WTC11 (cell line): ENCODE measurements at regions of chr10 and their contacts with region 1.

Region 1: GRCh38 chr10:15585303-15585715 is 134.4 kb downstream of the ITGA8 start:
- DNase-seq: peak; percentile 74
- ATAC-seq: peak; percentile 99
- H3K4me3 Mint-ChIP-seq: no peak overlapping the region
- H3K27ac Mint-ChIP-seq: no peak overlapping the region
- H3K4me1 Mint-ChIP-seq: no peaks in the 10 kb centered on the region
- H3K27me3 Mint-ChIP-seq: no peaks in the 10 kb centered on the region; the same call in 1 of the 2 replicates
- CTCF ChIP-seq: peak; percentile 90

Region 2: DNA sequence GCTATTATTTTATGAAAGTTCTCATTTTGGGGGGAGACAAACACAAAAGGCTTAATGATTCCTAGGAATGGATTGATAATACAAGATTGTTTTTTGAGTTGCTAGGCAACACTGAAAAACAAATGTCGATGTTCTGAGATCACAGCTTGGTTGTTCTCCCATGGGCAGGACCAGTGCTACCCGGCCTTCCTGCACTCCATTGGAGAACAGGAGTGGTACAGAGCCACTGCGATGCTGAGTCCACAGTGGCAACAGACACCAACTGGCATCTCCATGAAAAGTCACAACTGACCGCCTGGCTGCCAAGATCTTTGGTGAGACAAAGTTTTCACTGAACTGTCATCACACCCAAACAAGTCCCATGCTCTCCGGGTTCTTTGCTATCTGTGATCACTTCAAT is 348.0 kb before region 1 on chr10:
- CTCF ChIA-PET with region 1: no interaction called
- POLR2A ChIA-PET with region 1: no interaction called
- DNase-seq: no peak
- ATAC-seq: peak; percentile 55
- H3K4me3 Mint-ChIP-seq: no peak overlapping the region
- H3K27ac Mint-ChIP-seq: no peak overlapping the region
- H3K4me1 Mint-ChIP-seq: no peaks in the 10 kb centered on the region
- H3K27me3 Mint-ChIP-seq: peaks cover 2% of the 10 kb centered on the region; the same call in 1 of the 2 replicates
- CTCF ChIP-seq: no peak

Region 3: DNA sequence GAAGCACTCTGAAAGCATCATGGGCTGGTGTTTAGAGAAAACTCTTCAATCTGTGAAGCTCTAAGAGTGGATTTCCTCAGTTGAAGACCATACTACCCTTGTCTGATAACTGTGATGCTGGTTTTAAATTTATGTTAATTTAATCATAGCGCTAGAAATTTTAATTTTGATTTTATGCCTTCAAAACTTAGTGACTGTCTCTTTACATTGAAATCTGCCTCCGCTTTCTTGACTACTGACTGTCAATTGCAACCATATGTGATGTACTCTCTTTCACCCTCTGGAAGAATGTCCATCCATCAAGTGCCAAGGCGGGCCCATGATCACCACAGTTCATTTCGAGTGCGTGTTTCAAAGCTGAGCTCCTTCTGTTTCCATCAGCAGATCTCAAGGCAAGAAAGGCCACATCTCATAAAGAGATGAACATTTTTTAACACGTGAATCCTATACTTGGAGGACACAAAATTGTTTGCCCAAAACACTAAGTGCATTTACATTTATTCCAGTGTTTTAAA is 12.7 kb before region 1 on chr10:
- CTCF ChIA-PET with region 1: interaction called, 16 read pairs
- POLR2A ChIA-PET with region 1: no interaction called
- DNase-seq: no peak
- ATAC-seq: no peak
- H3K4me3 Mint-ChIP-seq: no peak overlapping the region
- H3K27ac Mint-ChIP-seq: no peak overlapping the region
- H3K4me1 Mint-ChIP-seq: peaks cover 6% of the 10 kb centered on the region
- H3K27me3 Mint-ChIP-seq: 0 out of 2 replicates have a peak, but pooled peaks cover 3% of the 10 kb centered on the region
- CTCF ChIP-seq: no peak